ENCODE measurements at regions of chr14 and their contacts with region 1.

Region 1: DNA sequence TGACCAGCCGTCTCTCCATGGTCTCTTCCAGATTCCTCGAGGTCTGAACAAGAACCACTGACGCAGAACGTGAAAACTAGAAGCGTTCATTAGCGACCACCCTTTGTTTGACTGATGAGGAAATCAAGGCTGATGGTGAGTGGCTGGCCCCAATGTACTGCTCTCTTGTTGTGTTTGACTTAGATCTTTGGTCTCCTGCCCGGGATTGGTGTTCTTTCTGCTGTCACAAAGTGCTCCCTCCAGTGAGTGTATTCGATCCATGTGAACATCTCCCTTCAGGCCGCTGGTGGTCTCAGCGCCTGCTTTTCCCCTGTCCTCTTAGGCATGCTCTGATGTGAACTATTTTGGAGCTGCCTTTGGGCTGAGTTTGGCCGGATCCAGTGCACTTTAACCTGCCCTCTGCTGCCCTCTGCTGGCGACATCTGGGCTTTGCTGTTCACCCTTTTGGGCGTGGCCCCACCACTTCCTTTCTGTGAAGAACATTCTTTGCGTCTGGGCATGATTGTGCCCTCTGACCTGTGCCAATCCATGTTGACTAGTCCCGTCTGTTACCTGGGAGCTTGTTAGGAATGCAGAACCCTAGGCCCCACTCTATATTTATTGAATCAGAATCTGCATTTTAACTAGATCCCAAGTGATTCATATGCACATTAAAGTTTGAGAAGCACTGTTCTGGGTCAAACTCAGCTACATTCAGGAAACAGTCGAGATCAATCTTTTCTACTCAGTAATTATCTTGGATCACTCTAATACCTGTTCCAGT is 279.2 kb downstream of the TTC6 start:
- DNase-seq: no peak
- H3K4me3 ChIP-seq: no peak overlapping the region
- CTCF ChIP-seq: peak; percentile 94

Region 2: DNA sequence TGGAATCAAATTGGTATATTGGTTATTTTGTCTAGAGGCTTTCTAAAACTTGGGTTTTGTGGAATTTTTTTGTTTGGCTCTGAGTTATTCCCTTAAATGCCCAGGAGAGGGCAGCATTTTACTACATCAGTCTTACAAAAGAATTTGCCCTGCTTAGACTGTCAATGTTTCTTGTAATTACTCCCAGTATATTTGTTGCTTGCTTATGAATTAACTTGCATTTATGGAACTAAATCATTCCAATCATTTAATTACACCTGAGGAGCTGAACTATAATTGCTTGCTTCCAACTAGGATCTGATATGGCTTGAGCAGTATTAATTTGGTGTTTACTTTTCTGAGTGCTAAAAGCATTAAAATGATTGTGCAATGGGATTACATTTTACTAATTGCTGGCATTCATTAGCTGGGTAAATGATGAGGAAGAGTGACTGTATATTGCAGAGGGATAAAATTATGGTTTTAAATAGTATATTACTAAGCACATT is 628.1 kb before region 1 on chr14:
- CTCF ChIA-PET with region 1: interaction called, 54 read pairs
- POLR2A ChIA-PET with region 1: no interaction called
- DNase-seq: peak; percentile 19
- H3K4me3 ChIP-seq: no peak overlapping the region
- CTCF ChIP-seq: peak; percentile 19

Region 3: GRCh38 chr14:37594238-37594914 is 280.2 kb before region 1 on chr14:
- CTCF ChIA-PET with region 1: interaction called, 11 read pairs
- POLR2A ChIA-PET with region 1: no interaction called
- DNase-seq: peak; percentile 9
- H3K4me3 ChIP-seq: peak overlapping the region; percentile 63
- CTCF ChIP-seq: peak; percentile 67

Region 4: GRCh38 chr14:37709419-37710195 is 165.0 kb before region 1 on chr14:
- CTCF ChIA-PET with region 1: interaction called, 180 read pairs
- POLR2A ChIA-PET with region 1: no interaction called
- DNase-seq: no peak
- H3K4me3 ChIP-seq: no peak overlapping the region
- CTCF ChIP-seq: peak; percentile 42

Region 5: GRCh38 chr14:37834275-37834674 is 40.3 kb before region 1 on chr14:
- CTCF ChIA-PET with region 1: no interaction called
- POLR2A ChIA-PET with region 1: no interaction called
- DNase-seq: no peak
- H3K4me3 ChIP-seq: no peak overlapping the region
- CTCF ChIP-seq: no peak

Region 6: DNA sequence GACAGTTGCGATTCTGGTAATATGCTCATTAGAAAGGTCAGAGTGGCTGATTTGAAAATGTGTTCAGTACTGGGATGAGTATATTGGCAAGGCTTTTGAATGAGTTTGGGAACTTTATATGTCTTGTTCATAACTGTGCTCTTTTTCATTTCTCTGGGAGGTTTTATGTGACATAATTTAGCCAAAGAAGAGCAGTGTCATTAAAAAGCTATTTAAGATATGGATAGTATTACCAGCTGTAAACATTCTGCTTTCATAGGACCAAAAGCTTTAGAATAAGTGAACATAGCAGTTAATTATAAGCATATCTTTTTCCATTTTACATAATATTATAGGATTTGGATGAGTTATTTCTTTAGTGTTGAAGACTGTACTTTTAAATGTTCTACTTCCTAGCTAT is 18.7 kb before region 1 on chr14:
- CTCF ChIA-PET with region 1: interaction called, 14 read pairs
- POLR2A ChIA-PET with region 1: no interaction called
- DNase-seq: no peak
- H3K4me3 ChIP-seq: no peak overlapping the region
- CTCF ChIP-seq: no peak

Region 7: DNA sequence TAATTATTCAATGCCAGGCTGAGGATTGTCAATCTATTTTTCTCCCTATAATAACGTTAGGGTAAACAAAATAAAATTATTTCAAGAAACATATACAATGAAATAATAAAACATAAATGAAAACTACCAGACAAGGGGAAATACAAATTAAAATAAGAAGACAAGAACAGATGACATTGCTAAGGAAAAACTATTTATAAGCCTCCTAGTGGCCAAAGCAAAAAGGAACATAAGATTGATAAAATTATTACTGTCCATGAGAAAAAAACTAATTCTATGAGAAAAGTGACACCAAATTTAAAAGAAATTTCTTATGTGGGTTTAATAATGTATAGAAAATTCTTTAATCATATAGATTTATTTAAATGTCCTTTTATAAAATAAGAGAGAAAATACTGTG is 15.5 kb after region 1 on chr14:
- CTCF ChIA-PET with region 1: interaction called, 27 read pairs
- POLR2A ChIA-PET with region 1: no interaction called
- DNase-seq: no peak
- H3K4me3 ChIP-seq: no peak overlapping the region
- CTCF ChIP-seq: peak; percentile 9